ENCODE measurements at regions of chr6 and their contacts with region 1.

Region 1: GRCh38 chr6:51959744-51960383 is 127.5 kb downstream of the PKHD1 start:
- DNase-seq: peak; percentile 82 to 91
- H3K4me3 ChIP-seq: no peak overlapping the region
- H3K27ac ChIP-seq: no peak overlapping the region
- H3K4me1 ChIP-seq: no peaks in the 10 kb centered on the region
- H3K27me3 ChIP-seq: peaks cover 0 to 5% (median 0%) of the 10 kb centered on the region in 3 donors
- CTCF ChIP-seq: peak in 5 of 7 experiments; percentile 31 to 82 (median 46)
- EP300 ChIP-seq: no peak
- POLR2A ChIP-seq: no peak

Region 2: DNA sequence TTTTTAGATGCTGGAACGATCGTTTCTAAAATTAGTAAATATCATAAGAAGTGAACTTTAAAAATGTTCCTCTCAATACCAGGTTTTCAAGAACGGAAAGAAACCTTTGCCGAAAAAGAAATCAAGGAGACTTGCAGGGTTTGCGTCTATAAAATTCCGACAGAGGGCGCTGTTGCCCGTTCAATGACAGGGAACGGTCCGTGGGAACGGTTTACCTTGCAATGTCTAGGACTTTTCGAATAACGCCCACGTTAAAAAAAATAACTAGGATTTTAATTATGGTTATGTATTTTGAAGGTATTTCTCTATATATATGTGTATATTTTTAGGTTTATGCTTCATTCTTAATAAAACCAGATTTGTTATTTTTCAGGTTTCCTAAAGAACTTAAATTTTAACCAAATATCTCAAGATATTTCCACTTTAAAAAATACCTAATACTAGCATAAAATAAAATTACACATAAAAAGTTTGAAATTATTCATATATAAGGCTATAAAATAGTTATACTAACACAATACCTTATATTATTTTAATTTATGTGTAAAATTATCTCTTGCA is 1143.7 kb before region 1 on chr6:
- intact Hi-C with region 1: loop called (anchors 10 kb)
- DNase-seq: peak; percentile 76 to 91
- H3K4me3 ChIP-seq: peak overlapping the region; percentile 36 to 55 (median 44)
- H3K27ac ChIP-seq: no peak overlapping the region
- H3K4me1 ChIP-seq: peaks cover 11 to 33% (median 25%) of the 10 kb centered on the region in 4 donors
- H3K27me3 ChIP-seq: peaks cover 14 to 87% (median 50%) of the 10 kb centered on the region in 3 donors
- CTCF ChIP-seq: peak in 4 of 7 experiments; percentile 44 to 86 (median 76)
- EP300 ChIP-seq: no peak
- POLR2A ChIP-seq: no peak

Region 3: GRCh38 chr6:51514748-51515402 is 445.0 kb before region 1 on chr6:
- intact Hi-C with region 1: no loop called
- DNase-seq: no peak
- H3K4me3 ChIP-seq: no peak overlapping the region
- H3K27ac ChIP-seq: no peak overlapping the region
- H3K4me1 ChIP-seq: no peaks in the 10 kb centered on the region
- H3K27me3 ChIP-seq: no peaks in the 10 kb centered on the region
- CTCF ChIP-seq: no peak
- EP300 ChIP-seq: no peak
- POLR2A ChIP-seq: no peak

Region 4: DNA sequence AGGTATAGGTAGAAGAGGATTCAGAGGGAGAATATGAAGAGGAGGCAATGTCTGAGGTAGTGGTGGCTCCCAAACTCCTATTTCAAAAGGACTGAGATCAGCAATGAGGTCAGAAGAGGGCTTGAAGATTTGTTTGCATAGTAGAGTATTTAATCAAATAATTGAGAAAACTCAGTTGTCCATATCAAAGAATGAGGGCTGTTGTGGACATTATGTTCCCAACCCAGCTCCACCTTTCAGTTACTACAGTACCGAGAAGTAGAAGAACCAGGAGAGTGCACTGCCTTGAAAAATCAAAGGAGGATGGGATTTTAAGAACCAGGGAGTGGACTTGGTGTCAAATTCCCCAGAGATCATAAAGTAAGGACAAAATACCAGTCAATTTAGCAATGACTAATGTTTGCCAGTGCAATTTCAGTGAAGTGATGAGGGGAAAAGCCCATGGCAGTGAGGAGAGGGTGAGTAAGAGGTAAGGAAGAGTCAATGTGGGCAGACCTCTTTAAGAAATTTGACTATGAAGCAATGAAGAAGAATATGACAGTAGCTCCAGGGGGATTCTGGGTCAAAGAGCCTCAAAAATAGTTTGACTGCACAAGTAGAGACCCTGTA is 254.8 kb before region 1 on chr6:
- intact Hi-C with region 1: no loop called
- DNase-seq: no peak
- H3K4me3 ChIP-seq: no peak overlapping the region
- H3K27ac ChIP-seq: no peak overlapping the region
- H3K4me1 ChIP-seq: no peaks in the 10 kb centered on the region
- H3K27me3 ChIP-seq: no peaks in the 10 kb centered on the region
- CTCF ChIP-seq: no peak
- EP300 ChIP-seq: no peak
- POLR2A ChIP-seq: no peak

Region 5: GRCh38 chr6:51717477-51717876 is 242.4 kb before region 1 on chr6:
- intact Hi-C with region 1: no loop called
- DNase-seq: no peak
- H3K4me3 ChIP-seq: no peak overlapping the region
- H3K27ac ChIP-seq: no peak overlapping the region
- H3K4me1 ChIP-seq: no peaks in the 10 kb centered on the region
- H3K27me3 ChIP-seq: no peaks in the 10 kb centered on the region
- CTCF ChIP-seq: no peak
- EP300 ChIP-seq: no peak
- POLR2A ChIP-seq: no peak

Region 6: DNA sequence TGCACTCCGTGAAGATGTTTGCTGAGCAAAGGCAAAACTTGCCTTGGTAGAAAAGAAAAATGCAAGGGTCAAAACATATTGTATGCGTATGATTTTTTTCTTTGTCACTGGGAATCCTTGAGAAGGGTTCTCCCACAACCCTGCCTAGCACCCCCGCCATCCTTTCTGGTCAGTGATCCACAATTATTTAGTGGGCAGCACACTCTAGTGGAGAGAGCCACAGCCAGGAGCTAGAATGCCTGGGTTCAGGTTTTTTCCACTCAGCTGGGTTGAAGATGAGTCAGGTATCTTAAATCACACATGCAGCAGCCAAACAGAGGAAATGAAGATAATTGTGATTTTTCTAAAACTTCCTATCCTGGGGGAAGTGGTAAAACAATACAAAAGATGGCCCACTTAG is 115.5 kb before region 1 on chr6:
- intact Hi-C with region 1: loop called (anchors 10 kb)
- DNase-seq: no peak
- H3K4me3 ChIP-seq: no peak overlapping the region
- H3K27ac ChIP-seq: no peak overlapping the region
- H3K4me1 ChIP-seq: no peaks in the 10 kb centered on the region
- H3K27me3 ChIP-seq: no peaks in the 10 kb centered on the region
- CTCF ChIP-seq: peak in 1 of 7 experiments; percentile 8
- EP300 ChIP-seq: no peak
- POLR2A ChIP-seq: no peak

Region 7: DNA sequence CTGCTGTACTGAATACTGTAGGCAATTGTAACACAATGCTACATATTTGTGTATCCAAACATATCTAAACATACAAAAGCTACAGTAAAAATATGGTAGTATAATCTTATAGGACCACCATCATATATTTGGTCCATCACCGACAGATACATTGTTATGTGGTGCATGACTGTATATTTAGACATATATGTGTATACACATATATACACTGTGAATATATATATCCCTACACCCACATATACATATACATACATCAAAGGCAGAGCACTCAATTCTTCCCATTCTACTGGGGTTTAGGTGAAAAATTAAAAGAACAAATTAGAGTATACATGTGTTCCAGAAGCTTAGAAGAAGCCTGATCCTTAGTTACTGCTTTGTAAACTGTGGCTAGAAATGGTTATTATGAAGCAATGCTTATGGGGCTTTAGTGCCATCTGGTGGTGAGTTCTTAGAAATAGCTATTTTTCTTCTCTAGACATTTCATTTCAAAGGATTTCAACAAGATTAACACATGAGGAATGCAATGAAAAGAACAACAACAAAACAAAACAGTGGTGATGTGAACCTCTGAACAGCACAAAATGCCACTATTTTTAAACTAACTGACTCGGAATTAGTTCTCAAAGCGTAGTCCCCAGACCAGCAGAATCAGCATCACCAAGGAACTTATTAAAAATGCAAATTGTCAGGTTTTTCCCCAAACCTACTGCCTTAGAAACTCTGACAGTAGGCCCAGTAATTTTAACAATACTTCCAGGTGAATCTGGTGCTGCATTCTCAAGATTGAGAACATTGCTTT is 89.6 kb after region 1 on chr6:
- intact Hi-C with region 1: no loop called
- DNase-seq: peak in 1 of 2 donors; percentile 64
- H3K4me3 ChIP-seq: no peak overlapping the region
- H3K27ac ChIP-seq: no peak overlapping the region
- H3K4me1 ChIP-seq: no peaks in the 10 kb centered on the region
- H3K27me3 ChIP-seq: no peaks in the 10 kb centered on the region
- CTCF ChIP-seq: peak in 4 of 7 experiments; percentile 16 to 57 (median 34)
- EP300 ChIP-seq: no peak
- POLR2A ChIP-seq: no peak

Measured in stomach (tissue), 19 donors.